Breast epithelium (tissue), 4 donors: ENCODE measurements at regions of chrX and their contacts with region 1.

Region 1: GRCh38 chrX:38798956-38799355 is 2.3 kb upstream of the MID1IP1 start:
- DNase-seq: no peak
- H3K4me3 ChIP-seq: no peak overlapping the region
- H3K27ac ChIP-seq: no peak overlapping the region
- H3K4me1 ChIP-seq: no peaks in the 10 kb centered on the region
- H3K27me3 ChIP-seq: peaks cover 0 to 35% of the 10 kb centered on the region in 2 donors
- CTCF ChIP-seq: no peak
- POLR2A ChIP-seq: no peak

Region 2: DNA sequence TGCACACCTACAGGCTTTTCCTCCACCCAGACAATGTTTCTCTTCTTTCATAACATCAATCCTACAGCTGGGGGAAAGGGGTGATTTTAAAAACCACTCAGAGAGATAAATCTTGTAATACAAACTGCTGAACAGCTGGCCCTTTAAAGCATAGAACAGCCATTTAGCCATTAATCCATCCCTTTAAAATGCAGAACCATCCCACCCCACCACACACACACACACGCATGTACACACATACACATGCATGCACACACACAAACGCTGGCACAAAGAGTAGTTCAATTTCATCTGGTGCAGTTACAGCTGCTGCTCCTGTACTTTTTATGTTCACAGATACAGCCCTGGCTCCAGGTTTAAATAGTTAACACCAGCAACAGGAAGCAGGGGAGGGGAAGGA is 428.4 kb after region 1 on chrX:
- intact Hi-C with region 1: loop called (anchors 5 kb)
- DNase-seq: no peak
- H3K4me3 ChIP-seq: no peak overlapping the region
- H3K27ac ChIP-seq: no peak overlapping the region
- H3K4me1 ChIP-seq: no peaks in the 10 kb centered on the region
- H3K27me3 ChIP-seq: peaks cover 0 to 57% of the 10 kb centered on the region in 2 donors
- CTCF ChIP-seq: no peak
- POLR2A ChIP-seq: no peak